ENCODE measurements at regions of chr15 and their contacts with region 1.

Region 1: GRCh38 chr15:91055548-91056331 is 33.3 kb upstream of the VPS33B start:
- DNase-seq: peak; percentile 83
- ATAC-seq: peak; percentile 91
- H3K4me3 ChIP-seq: no peak overlapping the region
- H3K27ac ChIP-seq: no peak overlapping the region
- H3K4me1 ChIP-seq: no peaks in the 10 kb centered on the region
- H3K27me3 ChIP-seq: peaks cover 71% of the 10 kb centered on the region
- CTCF ChIP-seq: peak; percentile 82

Region 2: DNA sequence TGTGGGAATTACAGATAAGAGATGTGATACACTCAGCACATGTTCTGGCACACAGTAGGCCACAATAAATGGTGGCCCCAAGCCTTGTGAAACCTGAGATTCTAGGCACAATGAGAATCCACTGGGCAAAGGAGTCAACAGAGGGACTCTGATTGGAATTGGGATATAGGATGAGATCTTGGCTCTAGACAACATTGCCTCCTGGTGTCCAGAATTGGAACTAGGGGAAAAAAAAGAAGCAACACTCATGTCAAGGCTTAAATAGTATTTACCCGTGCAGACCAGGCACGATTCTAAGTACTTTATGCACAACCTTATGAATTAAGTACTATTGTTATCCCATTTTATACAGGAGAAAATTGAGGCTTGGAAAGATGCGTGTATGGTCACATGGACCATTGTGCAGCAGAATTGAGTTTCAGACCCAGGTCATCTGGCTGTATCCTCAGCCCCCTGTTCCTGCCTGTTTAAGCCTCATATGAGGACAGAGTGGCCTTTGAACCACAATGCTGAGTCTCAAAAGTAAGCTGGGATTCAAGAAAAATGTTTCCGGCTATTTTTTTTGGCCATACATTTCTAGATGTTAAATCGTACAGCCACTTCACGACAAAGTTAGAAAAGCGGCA is 169.1 kb after region 1 on chr15:
- CTCF ChIA-PET with region 1: interaction called, 3 read pairs
- POLR2A ChIA-PET with region 1: no interaction called
- intact Hi-C with region 1: loop called (anchors 1 kb)
- DNase-seq: peak; percentile 66
- ATAC-seq: peak; percentile 43; the same call in 1 of the 2 replicates
- H3K4me3 ChIP-seq: no peak overlapping the region
- H3K27ac ChIP-seq: no peak overlapping the region
- H3K4me1 ChIP-seq: no peaks in the 10 kb centered on the region
- H3K27me3 ChIP-seq: peaks cover 43% of the 10 kb centered on the region
- CTCF ChIP-seq: peak; percentile 79

Region 3: GRCh38 chr15:91271565-91272153 is 215.9 kb after region 1 on chr15:
- CTCF ChIA-PET with region 1: interaction called, 15 read pairs
- POLR2A ChIA-PET with region 1: no interaction called
- intact Hi-C with region 1: loop called (anchors 1 kb)
- DNase-seq: peak; percentile 82
- ATAC-seq: peak; percentile 59
- H3K4me3 ChIP-seq: no peak overlapping the region
- H3K27ac ChIP-seq: no peak overlapping the region
- H3K4me1 ChIP-seq: no peaks in the 10 kb centered on the region
- H3K27me3 ChIP-seq: peaks cover 18% of the 10 kb centered on the region; the same call in 1 of the 2 replicates
- CTCF ChIP-seq: peak; percentile 88

Measured in PC-3 (cell line).